ENCODE measurements at regions of chr5 and their contacts with region 1.

Region 1: DNA sequence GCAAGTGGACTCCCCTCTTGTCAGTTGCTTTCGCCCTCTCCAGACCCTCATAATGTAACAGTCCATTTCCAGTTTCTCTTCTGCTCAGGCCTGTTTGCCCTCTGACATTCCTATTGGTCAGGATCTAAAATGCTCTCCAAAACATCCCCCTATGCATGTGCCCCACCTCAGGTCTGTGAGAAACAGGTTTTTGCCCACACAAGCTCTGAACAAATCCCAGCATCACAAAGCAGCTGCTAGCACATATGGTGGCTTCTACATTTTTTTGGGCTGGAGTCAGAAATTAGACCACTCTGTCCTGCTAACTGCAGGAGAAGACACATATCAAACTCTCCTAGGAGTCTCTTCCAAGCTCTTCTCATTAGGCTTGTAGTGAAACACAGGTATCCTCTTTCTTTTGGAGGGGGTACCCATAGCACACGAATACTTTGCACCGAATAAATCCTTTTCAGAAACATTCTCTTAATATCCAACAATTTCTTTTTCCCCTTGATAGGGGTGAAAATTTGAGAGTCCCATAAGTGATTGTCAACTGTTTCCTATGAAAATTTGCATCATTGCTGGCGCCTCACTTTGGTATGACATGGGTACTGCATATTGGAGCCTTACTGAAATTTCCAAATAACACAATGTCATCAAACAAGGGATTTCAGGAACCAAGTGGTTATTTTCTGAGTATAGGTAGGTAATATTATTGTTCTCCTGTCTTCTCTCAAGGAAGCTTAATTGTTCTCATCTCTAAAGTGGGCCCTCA is 19.3 kb upstream of the HSPA9 start:
- DNase-seq: no peak
- H3K4me3 ChIP-seq: no peak overlapping the region
- H3K27ac ChIP-seq: no peak overlapping the region
- H3K4me1 ChIP-seq: no peaks in the 10 kb centered on the region
- H3K27me3 ChIP-seq: no peaks in the 10 kb centered on the region
- CTCF ChIP-seq: peak in 4 of 6 experiments; percentile 19 to 38 (median 24)
- POLR2A ChIP-seq: no peak

Region 2: DNA sequence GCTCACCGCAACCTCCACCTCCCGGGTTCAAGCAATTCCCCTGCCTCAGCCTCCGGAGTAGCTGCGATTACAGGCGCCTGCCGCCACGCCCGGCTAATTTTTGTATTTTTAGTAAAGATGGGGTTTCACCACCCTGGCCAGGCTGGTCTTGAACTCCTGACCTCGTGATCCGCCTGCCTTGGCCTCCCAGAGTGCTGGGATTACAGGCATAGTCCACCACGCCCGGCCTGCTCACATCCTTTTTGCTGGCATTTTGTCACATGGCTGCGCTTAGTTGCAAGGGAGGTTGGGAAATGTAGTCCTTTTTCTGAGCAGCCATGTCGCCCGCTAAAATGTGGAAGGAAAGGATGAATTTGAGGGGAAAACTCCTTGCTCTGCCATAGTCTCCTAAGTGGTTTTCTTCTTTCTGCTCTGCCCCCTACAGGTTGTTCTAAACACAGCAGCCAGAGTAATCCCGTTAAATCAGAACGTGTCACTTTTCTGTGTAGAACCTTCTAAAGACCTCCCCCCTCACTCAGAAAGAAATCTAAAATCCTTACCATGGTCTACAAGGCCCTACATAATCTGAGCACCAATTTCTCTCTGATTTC is 38.5 kb after region 1 on chr5:
- intact Hi-C with region 1: loop called in 1 of 2 experiments (anchors 5 kb)
- DNase-seq: peak; percentile 49 to 83 (median 72)
- H3K4me3 ChIP-seq: no peak overlapping the region
- H3K27ac ChIP-seq: no peak overlapping the region
- H3K4me1 ChIP-seq: peaks cover 13 to 22% of the 10 kb centered on the region in 2 donors
- H3K27me3 ChIP-seq: no peaks in the 10 kb centered on the region
- CTCF ChIP-seq: peak; percentile 26 to 59 (median 50)
- POLR2A ChIP-seq: no peak

Measured in adrenal gland (tissue), 19 donors.